ENCODE measurements at regions of chr17 and their contacts with region 1.

Region 1: GRCh38 chr17:33583518-33584417 is 290.7 kb upstream of the ASIC2 start:
- DNase-seq: no peak
- H3K4me3 ChIP-seq: no peak overlapping the region; a peak in 1 of 8 replicates
- H3K27ac ChIP-seq: no peak overlapping the region
- H3K4me1 ChIP-seq: peaks cover 3 to 13% (median 12%) of the 10 kb centered on the region in 4 experiments; a peak in 6 of 7 replicates
- H3K27me3 ChIP-seq: no peaks in the 10 kb centered on the region
- CTCF ChIP-seq: no peak
- EP300 ChIP-seq: no peak
- POLR2A ChIP-seq: no peak
- RAD21 ChIP-seq: no peak

Region 2: GRCh38 chr17:33595828-33596227 is 12.1 kb after region 1 on chr17:
- CTCF ChIA-PET with region 1: interaction called, 17 read pairs
- POLR2A ChIA-PET with region 1: no interaction called
- DNase-seq: no peak
- H3K4me3 ChIP-seq: no peak overlapping the region
- H3K27ac ChIP-seq: no peak overlapping the region
- H3K4me1 ChIP-seq: peaks cover 0 to 6% (median 0%) of the 10 kb centered on the region in 4 experiments; a peak in 1 of 7 replicates
- H3K27me3 ChIP-seq: no peaks in the 10 kb centered on the region
- CTCF ChIP-seq: no peak
- EP300 ChIP-seq: no peak
- POLR2A ChIP-seq: no peak
- RAD21 ChIP-seq: no peak

Region 3: GRCh38 chr17:33615861-33616260 is 32.1 kb after region 1 on chr17:
- CTCF ChIA-PET with region 1: no interaction called
- POLR2A ChIA-PET with region 1: no interaction called
- DNase-seq: no peak
- H3K4me3 ChIP-seq: no peak overlapping the region
- H3K27ac ChIP-seq: no peak overlapping the region
- H3K4me1 ChIP-seq: no peaks in the 10 kb centered on the region
- H3K27me3 ChIP-seq: no peaks in the 10 kb centered on the region
- CTCF ChIP-seq: no peak
- EP300 ChIP-seq: no peak
- POLR2A ChIP-seq: no peak
- RAD21 ChIP-seq: no peak